GM12878 (cell line): ENCODE measurements at regions of chr11 and their contacts with region 1.

Region 1: DNA sequence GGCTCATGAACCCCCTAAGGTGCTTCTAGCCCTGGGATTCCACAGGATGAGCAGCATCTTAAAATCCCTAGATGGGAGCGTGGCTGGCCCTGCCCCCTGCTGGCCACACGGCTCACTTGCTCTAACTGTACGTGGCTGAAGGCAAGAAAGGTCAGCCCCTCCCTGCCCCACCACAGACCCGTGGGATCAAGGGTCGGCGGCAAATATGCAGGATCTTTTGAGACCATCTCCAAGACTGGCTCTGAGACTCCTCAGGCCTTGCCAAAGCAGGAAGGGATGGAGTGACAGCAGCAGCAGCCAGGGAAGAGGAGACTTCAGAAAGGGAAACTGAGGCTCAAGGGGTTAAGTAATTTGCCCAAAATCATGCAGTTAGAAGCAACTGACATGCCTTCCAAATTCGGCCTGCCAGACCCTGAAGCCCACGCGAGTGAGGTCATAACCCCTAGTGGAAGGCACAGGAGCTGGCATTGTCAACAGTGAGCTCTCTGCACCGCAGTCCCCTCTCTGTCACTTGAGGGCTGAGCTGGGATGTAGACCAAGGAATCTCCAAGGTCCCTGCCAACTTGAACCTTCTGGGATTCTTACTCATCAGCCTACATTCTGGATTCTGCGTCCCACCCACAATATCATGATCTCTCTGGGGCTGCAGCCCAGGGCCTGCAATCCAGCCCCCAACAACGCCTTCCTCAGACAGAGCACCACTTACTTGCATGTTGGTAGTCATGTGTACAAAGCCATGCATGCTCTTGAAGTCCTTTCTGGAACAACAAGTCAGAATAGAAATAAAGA is 31.4 kb downstream of the CREB3L1 start:
- DNase-seq: no peak
- ATAC-seq: peak; percentile 90
- H3K4me3 ChIP-seq: no peak overlapping the region
- H3K27ac ChIP-seq: no peak overlapping the region
- H3K4me1 ChIP-seq: peaks cover 7% of the 10 kb centered on the region
- H3K27me3 ChIP-seq: no peaks in the 10 kb centered on the region; a peak in 1 of 4 replicates
- CTCF ChIP-seq: peak; percentile 85 to 96 (median 93)
- EP300 ChIP-seq: no peak
- POLR2A ChIP-seq: no peak
- RAD21 ChIP-seq: peak; percentile 88

Region 2: DNA sequence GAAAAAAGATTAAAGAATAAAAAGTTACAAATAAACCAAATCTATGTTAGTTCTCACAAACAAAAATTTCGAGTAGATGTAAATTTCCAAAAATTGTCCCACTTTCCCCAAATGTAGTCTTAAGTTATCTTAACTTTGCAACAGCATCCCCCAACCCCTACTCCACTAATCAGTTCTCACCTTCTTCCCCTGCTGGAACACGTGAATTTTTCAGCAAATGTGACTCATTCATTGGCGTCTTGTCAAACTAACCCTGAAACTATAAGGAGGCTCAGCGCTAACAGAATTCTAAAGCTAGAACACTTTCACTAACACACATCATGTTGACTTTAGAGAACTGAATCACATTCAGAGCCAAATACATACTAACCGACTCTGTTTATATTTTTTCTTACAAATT is 233.7 kb before region 1 on chr11:
- CTCF ChIA-PET with region 1: no interaction called
- POLR2A ChIA-PET with region 1: no interaction called
- RAD21 ChIA-PET with region 1: no interaction called
- SMC1A ChIA-PET with region 1: no interaction called
- in situ Hi-C with region 1: no loop called
- intact Hi-C with region 1: no loop called
- DNase-seq: no peak
- ATAC-seq: no peak
- H3K4me3 ChIP-seq: no peak overlapping the region
- H3K27ac ChIP-seq: no peak overlapping the region
- H3K4me1 ChIP-seq: no peaks in the 10 kb centered on the region
- H3K27me3 ChIP-seq: no peaks in the 10 kb centered on the region
- CTCF ChIP-seq: no peak
- EP300 ChIP-seq: no peak
- POLR2A ChIP-seq: no peak
- RAD21 ChIP-seq: no peak

Region 3: DNA sequence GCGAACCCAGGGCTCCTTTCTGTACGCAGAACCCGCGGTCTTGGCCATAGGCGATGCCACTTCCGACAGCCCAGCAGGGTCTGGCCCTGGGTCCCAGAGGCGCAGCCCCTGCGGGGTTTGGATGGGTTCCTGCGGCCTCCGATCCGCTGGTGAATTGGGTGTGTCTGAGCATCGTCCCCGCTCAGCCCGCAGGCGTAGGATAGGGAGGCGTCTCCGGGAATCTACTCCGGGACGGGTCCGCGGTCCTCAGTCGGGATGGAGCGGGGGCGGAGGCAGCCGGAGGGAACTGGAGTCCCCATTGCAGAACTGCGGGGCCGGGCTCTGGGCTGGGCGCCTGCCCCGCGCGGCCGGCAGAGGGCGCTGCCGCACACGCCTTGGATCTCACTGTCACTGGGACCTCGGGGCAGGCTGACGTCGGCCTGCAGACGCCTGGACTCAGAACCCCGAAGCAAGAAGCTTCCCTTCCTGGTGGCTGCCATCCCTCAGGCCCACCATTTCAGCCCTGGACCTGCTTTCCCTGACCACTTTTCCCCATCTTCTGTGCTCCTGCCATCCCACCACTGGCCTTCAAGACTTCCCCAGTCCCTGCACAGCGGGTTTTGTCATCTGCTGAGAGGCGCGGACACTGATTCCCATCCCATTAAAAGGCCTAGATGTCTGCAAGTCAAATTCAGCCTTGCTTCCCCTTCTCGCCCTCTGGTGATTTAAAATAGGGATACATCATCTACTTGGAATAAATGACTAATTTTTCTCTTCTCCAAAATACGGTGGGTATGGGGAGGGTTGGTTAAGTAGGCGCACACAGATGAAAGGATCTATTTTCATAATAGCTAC is 69.6 kb before region 1 on chr11:
- CTCF ChIA-PET with region 1: interaction called, 626 read pairs
- POLR2A ChIA-PET with region 1: interaction called, 9 read pairs
- RAD21 ChIA-PET with region 1: interaction called, 316 read pairs
- SMC1A ChIA-PET with region 1: interaction called, 120 read pairs
- in situ Hi-C with region 1: loop called (anchors 5 kb)
- intact Hi-C with region 1: loop called (anchors 1 kb)
- DNase-seq: no peak
- ATAC-seq: peak; percentile 93
- H3K4me3 ChIP-seq: peak overlapping the region; percentile 39; the same call in 1 of the 2 replicates
- H3K27ac ChIP-seq: no peak overlapping the region
- H3K4me1 ChIP-seq: peaks cover 12% of the 10 kb centered on the region
- H3K27me3 ChIP-seq: peaks cover 0 to 5% of the 10 kb centered on the region in 2 experiments; a peak in 1 of 4 replicates
- CTCF ChIP-seq: peak; percentile 95 to 96 (median 95)
- EP300 ChIP-seq: no peak
- POLR2A ChIP-seq: no peak
- RAD21 ChIP-seq: peak; percentile 86

Region 4: DNA sequence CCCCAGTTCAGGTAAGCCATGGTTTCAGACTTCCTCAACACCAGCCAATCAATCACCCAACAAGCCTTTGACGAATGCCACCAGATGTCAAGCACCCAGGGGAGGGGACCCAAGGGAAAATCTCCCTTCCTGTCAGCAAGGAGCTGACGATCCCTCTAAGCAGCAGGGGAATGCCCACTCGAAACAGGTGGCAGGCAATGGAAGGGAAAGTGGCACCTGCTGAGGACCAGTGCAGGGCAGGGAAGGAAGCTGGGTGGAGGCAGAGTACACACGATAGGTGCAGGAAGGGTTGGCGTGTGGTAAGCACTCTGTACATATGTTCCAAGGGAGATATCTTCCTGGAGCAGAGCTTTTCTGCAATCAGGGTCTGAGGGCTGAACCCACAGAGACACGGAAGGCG is 43.1 kb before region 1 on chr11:
- CTCF ChIA-PET with region 1: interaction called, 60 read pairs
- POLR2A ChIA-PET with region 1: interaction called, 5 read pairs
- RAD21 ChIA-PET with region 1: interaction called, 20 read pairs
- SMC1A ChIA-PET with region 1: interaction called, 15 read pairs
- in situ Hi-C with region 1: no loop called
- intact Hi-C with region 1: no loop called
- DNase-seq: peak; percentile 47
- ATAC-seq: peak; percentile 58
- H3K4me3 ChIP-seq: no peak overlapping the region
- H3K27ac ChIP-seq: peak overlapping the region; percentile 61
- H3K4me1 ChIP-seq: peaks cover 33% of the 10 kb centered on the region
- H3K27me3 ChIP-seq: no peaks in the 10 kb centered on the region
- CTCF ChIP-seq: peak in 1 of 3 experiments; percentile 53; a peak in 2 of 6 replicates
- EP300 ChIP-seq: no peak
- POLR2A ChIP-seq: no peak
- RAD21 ChIP-seq: no peak

Region 5: DNA sequence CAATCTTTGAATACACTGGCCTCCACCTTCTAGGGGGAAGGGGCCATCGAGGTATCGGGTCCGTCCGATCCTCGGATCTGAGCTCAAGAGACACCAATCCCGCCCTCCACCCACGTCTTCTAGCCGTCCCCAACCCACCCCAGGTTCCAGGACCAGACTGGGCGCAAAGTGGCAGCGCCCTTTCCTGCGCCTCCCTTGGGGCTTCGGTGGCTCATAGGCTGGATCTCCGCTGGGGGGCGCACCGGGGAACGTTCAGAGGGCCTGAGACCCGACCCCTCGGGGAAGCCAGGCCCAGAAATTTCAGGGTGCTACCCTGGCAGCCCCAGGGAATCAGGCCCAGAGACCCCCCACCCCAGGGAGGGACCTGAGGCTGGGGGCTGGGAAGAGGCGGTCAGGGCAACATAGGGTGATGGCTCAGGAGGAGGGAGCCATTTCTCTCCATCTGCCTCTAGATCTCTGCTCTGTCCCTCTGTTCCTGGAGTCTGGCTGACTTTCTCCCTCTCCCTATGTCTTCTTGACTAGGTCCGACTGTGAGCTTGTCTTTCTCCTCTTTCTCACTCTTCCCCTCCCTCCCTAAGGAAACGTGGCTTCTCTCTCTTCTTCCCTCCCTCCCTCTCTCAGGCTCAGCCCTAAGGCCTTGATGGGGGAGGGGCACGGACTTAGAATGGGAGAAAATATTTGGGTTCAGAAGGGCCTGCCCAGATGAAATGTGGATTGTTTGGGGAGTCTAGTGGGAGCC is 30.3 kb before region 1 on chr11:
- CTCF ChIA-PET with region 1: interaction called, 68 read pairs
- POLR2A ChIA-PET with region 1: interaction called, 3 read pairs
- RAD21 ChIA-PET with region 1: interaction called, 4 read pairs
- SMC1A ChIA-PET with region 1: interaction called, 5 read pairs
- in situ Hi-C with region 1: no loop called
- intact Hi-C with region 1: no loop called
- DNase-seq: no peak
- ATAC-seq: peak; percentile 71
- H3K4me3 ChIP-seq: peak overlapping the region; percentile 70
- H3K27ac ChIP-seq: peak overlapping the region; percentile 42; the same call in 1 of the 2 replicates
- H3K4me1 ChIP-seq: 0 out of 2 replicates have a peak, but pooled peaks cover 5% of the 10 kb centered on the region
- H3K27me3 ChIP-seq: 0 out of 4 replicates have a peak, but pooled peaks cover 2 to 7% of the 10 kb centered on the region in 2 experiments
- CTCF ChIP-seq: peak; percentile 43 to 62 (median 44); a peak in 5 of 6 replicates
- EP300 ChIP-seq: no peak
- POLR2A ChIP-seq: no peak
- RAD21 ChIP-seq: no peak

Region 6: GRCh38 chr11:46295312-46296058 is 13.3 kb before region 1 on chr11:
- CTCF ChIA-PET with region 1: interaction called, 26 read pairs
- POLR2A ChIA-PET with region 1: no interaction called
- RAD21 ChIA-PET with region 1: interaction called, 15 read pairs
- SMC1A ChIA-PET with region 1: interaction called, 5 read pairs
- in situ Hi-C with region 1: no loop called
- intact Hi-C with region 1: no loop called
- DNase-seq: no peak
- ATAC-seq: peak; percentile 74
- H3K4me3 ChIP-seq: peak overlapping the region; percentile 54; the same call in 1 of the 2 replicates
- H3K27ac ChIP-seq: no peak overlapping the region
- H3K4me1 ChIP-seq: peaks cover 22% of the 10 kb centered on the region
- H3K27me3 ChIP-seq: no peaks in the 10 kb centered on the region; a peak in 2 of 4 replicates
- CTCF ChIP-seq: no peak
- EP300 ChIP-seq: no peak
- POLR2A ChIP-seq: peak; percentile 32; the same call in 1 of the 2 replicates
- RAD21 ChIP-seq: no peak